B cell (primary cell): ENCODE measurements at regions of chr6 and their contacts with region 1.

Region 1: DNA sequence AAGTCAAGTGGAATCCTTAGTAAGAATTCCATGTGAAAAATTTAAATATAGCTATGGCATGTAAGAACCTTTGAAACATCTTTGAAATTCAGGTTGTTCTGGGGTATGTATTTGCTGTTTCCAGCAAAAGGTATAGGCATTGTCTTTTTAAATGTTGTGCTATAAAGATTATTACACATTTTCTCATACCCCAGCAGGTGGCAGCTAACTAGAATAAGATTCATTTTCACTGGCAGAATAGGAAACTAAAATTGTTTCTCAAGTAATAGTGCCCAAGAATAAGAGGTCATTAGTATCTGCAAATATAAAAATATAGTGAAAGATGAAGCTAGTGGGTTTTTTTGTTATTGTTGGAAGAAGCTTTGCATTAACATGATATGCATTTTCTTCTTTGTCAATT is 1.8 kb downstream of the GRIK2 start:
- DNase-seq: no peak
- ATAC-seq: no peak
- H3K4me3 ChIP-seq: no peak overlapping the region
- H3K4me3 Mint-ChIP-seq: no peak overlapping the region
- H3K27ac ChIP-seq: no peak overlapping the region
- H3K27ac Mint-ChIP-seq: no peak overlapping the region
- H3K4me1 ChIP-seq: no peaks in the 10 kb centered on the region
- H3K4me1 Mint-ChIP-seq: no peaks in the 10 kb centered on the region
- H3K27me3 ChIP-seq: peaks cover 0 to 46% (median 24%) of the 10 kb centered on the region in 4 experiments
- H3K27me3 Mint-ChIP-seq: peaks cover 48% of the 10 kb centered on the region
- CTCF ChIP-seq: no peak

Region 2: DNA sequence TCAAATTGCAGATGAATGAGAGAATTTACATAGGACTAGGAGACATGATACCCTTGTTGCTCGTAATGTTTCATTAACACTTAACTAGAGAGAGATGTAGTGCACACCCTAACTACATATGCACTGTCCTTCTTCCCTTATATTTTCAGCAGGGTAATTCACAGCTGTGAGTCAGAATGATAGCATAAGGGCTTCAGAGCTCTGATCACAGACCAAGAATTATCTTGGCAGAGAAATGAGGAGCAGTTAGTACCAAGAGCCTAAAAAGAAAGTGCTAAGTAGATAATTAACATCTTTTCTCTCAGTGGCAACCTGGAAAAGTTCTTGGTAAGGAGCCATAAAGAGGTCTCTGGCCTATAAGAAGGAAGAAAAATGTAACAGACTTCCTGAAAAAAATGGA is 33.9 kb after region 1 on chr6:
- CTCF ChIA-PET with region 1: no interaction called
- POLR2A ChIA-PET with region 1: no interaction called
- intact Hi-C with region 1: loop called (anchors 1 kb)
- DNase-seq: no peak
- ATAC-seq: no peak
- H3K4me3 ChIP-seq: no peak overlapping the region
- H3K4me3 Mint-ChIP-seq: no peak overlapping the region
- H3K27ac ChIP-seq: no peak overlapping the region
- H3K27ac Mint-ChIP-seq: no peak overlapping the region
- H3K4me1 ChIP-seq: no peaks in the 10 kb centered on the region
- H3K4me1 Mint-ChIP-seq: no peaks in the 10 kb centered on the region
- H3K27me3 ChIP-seq: no peaks in the 10 kb centered on the region
- H3K27me3 Mint-ChIP-seq: no peaks in the 10 kb centered on the region
- CTCF ChIP-seq: no peak

Region 3: GRCh38 chr6:101956961-101957360 is 561.6 kb after region 1 on chr6:
- CTCF ChIA-PET with region 1: no interaction called
- POLR2A ChIA-PET with region 1: no interaction called
- intact Hi-C with region 1: no loop called
- DNase-seq: no peak
- ATAC-seq: no peak
- H3K4me3 ChIP-seq: no peak overlapping the region
- H3K4me3 Mint-ChIP-seq: no peak overlapping the region
- H3K27ac ChIP-seq: no peak overlapping the region
- H3K27ac Mint-ChIP-seq: no peak overlapping the region
- H3K4me1 ChIP-seq: no peaks in the 10 kb centered on the region
- H3K4me1 Mint-ChIP-seq: no peaks in the 10 kb centered on the region
- H3K27me3 ChIP-seq: no peaks in the 10 kb centered on the region
- H3K27me3 Mint-ChIP-seq: no peaks in the 10 kb centered on the region
- CTCF ChIP-seq: no peak